HCT116 (cell line): ENCODE measurements at regions of chr11 and their contacts with region 1.

Region 1: GRCh38 chr11:87352759-87353707 is 315.3 kb downstream of the TMEM135 start:
- DNase-seq: peak; percentile 57
- ATAC-seq: peak; percentile 100
- H3K4me3 ChIP-seq: no peak overlapping the region
- H3K27ac ChIP-seq: no peak overlapping the region
- H3K4me1 ChIP-seq: peaks cover 0 to 7% of the 10 kb centered on the region in 2 experiments; a peak in 1 of 4 replicates
- H3K27me3 ChIP-seq: no peaks in the 10 kb centered on the region
- CTCF ChIP-seq: peak; percentile 69 to 98 (median 95)
- POLR2A ChIP-seq: no peak
- RAD21 ChIP-seq: peak; percentile 95

Region 2: DNA sequence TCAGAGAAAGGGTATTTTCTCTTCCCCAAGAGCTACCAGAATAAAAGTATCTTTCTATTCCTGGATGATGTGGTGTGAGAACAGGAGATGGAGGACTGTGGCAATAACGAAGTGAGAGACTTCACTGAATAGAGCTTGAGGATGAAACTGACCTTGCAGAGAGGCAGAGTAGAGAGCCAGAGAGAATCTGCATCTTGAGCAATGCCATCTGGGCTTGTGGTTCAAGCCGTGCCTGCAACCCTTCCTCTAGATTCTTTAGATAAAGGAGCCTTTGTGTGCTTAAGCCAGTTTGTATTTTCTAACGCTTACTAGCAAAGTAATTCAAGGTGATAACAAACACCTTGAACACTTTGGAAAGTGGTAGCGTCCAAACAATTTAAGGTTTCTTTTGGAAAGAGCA is 682.8 kb before region 1 on chr11:
- CTCF ChIA-PET with region 1: no interaction called
- POLR2A ChIA-PET with region 1: no interaction called
- RAD21 ChIA-PET with region 1: no interaction called
- intact Hi-C with region 1: no loop called
- DNase-seq: no peak
- ATAC-seq: no peak
- H3K4me3 ChIP-seq: no peak overlapping the region
- H3K27ac ChIP-seq: no peak overlapping the region
- H3K4me1 ChIP-seq: peaks cover 0 to 9% of the 10 kb centered on the region in 2 experiments; a peak in 3 of 4 replicates
- H3K27me3 ChIP-seq: no peaks in the 10 kb centered on the region
- CTCF ChIP-seq: no peak
- POLR2A ChIP-seq: no peak
- RAD21 ChIP-seq: no peak

Region 3: GRCh38 chr11:86938900-86939880 is 413.8 kb before region 1 on chr11:
- CTCF ChIA-PET with region 1: interaction called, 3 read pairs
- POLR2A ChIA-PET with region 1: no interaction called
- RAD21 ChIA-PET with region 1: no interaction called
- intact Hi-C with region 1: loop called (anchors 5 kb)
- DNase-seq: peak; percentile 37
- ATAC-seq: peak; percentile 73
- H3K4me3 ChIP-seq: no peak overlapping the region
- H3K27ac ChIP-seq: no peak overlapping the region
- H3K4me1 ChIP-seq: no peaks in the 10 kb centered on the region
- H3K27me3 ChIP-seq: no peaks in the 10 kb centered on the region
- CTCF ChIP-seq: peak; percentile 57 to 65 (median 61); a peak in 5 of 6 replicates
- POLR2A ChIP-seq: no peak
- RAD21 ChIP-seq: peak; percentile 77

Region 4: GRCh38 chr11:87722756-87723565 is 369.9 kb after region 1 on chr11:
- CTCF ChIA-PET with region 1: no interaction called
- POLR2A ChIA-PET with region 1: no interaction called
- RAD21 ChIA-PET with region 1: no interaction called
- intact Hi-C with region 1: loop called (anchors 10 kb)
- DNase-seq: no peak
- ATAC-seq: peak; percentile 79
- H3K4me3 ChIP-seq: no peak overlapping the region
- H3K27ac ChIP-seq: no peak overlapping the region
- H3K4me1 ChIP-seq: no peaks in the 10 kb centered on the region
- H3K27me3 ChIP-seq: 0 out of 2 replicates have a peak, but pooled peaks cover 2% of the 10 kb centered on the region
- CTCF ChIP-seq: peak; percentile 33 to 86 (median 80); a peak in 5 of 6 replicates
- POLR2A ChIP-seq: no peak
- RAD21 ChIP-seq: peak; percentile 45

Region 5: GRCh38 chr11:88103337-88104206 is 750.5 kb after region 1 on chr11:
- CTCF ChIA-PET with region 1: no interaction called
- POLR2A ChIA-PET with region 1: no interaction called
- RAD21 ChIA-PET with region 1: no interaction called
- intact Hi-C with region 1: loop called (anchors 5 kb)
- DNase-seq: peak; percentile 85
- ATAC-seq: peak; percentile 98
- H3K4me3 ChIP-seq: no peak overlapping the region
- H3K27ac ChIP-seq: no peak overlapping the region
- H3K4me1 ChIP-seq: peaks cover 0 to 10% of the 10 kb centered on the region in 2 experiments; a peak in 2 of 4 replicates
- H3K27me3 ChIP-seq: no peaks in the 10 kb centered on the region
- CTCF ChIP-seq: peak; percentile 92 to 97 (median 93)
- POLR2A ChIP-seq: no peak
- RAD21 ChIP-seq: peak; percentile 74